MCF 10A (cell line): ENCODE measurements at regions of chr15 and their contacts with region 1.

Region 1: GRCh38 chr15:85800467-85801123 is 5.9 kb upstream of the KLHL25 start:
- DNase-seq: peak; percentile 86
- H3K4me3 Mint-ChIP-seq: no peak overlapping the region
- H3K27ac Mint-ChIP-seq: no peak overlapping the region
- H3K4me1 Mint-ChIP-seq: peaks cover 16% of the 10 kb centered on the region
- H3K27me3 Mint-ChIP-seq: no peaks in the 10 kb centered on the region
- CTCF ChIP-seq: peak; percentile 29

Region 2: DNA sequence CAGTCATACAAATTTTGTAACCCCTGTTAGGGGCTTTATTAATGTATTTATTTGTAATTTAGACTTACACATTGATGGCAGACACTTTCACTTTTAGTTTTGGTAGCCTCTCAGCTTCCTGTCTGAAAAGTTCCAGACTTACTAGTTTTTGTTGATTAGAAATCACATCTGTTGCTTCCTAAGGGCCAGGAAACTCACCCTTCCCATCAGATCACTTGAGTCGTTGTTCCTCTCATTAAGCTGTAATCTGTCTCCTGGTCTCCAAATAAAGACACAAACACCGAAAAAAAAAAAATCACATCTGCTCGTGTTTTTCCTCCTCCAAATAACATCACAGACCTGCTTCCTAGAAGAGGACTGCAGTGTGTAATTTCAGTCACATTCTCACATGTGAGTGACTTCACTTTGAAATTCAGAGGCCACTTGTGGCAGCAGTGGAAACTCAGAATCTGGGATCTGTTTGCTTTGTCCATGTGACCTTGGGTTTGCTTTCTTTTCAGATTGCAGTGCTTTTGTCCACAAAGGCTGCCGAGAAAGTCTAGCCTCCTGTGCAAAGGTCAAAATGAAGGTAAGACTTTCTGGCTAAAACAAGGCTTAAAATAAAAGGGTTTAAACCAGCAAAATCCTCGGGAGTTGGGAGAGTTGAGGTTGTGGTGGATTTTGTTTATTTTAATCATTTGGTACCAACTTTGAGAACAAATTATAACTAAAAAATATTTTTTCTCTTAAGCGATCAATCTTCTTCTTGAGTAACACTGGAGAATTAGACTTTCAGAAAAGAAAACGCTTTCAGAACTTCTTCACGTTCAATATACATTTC is 92.9 kb before region 1 on chr15:
- CTCF ChIA-PET with region 1: no interaction called
- POLR2A ChIA-PET with region 1: no interaction called
- intact Hi-C with region 1: no loop called
- DNase-seq: no peak
- H3K4me3 Mint-ChIP-seq: no peak overlapping the region
- H3K27ac Mint-ChIP-seq: peak overlapping the region; percentile 69
- H3K4me1 Mint-ChIP-seq: peaks cover 4% of the 10 kb centered on the region
- H3K27me3 Mint-ChIP-seq: no peaks in the 10 kb centered on the region
- CTCF ChIP-seq: no peak

Region 3: GRCh38 chr15:85819938-85820337 is 19.3 kb after region 1 on chr15:
- CTCF ChIA-PET with region 1: no interaction called
- POLR2A ChIA-PET with region 1: interaction called, 3 read pairs
- intact Hi-C with region 1: loop called (anchors 1 kb)
- DNase-seq: no peak
- H3K4me3 Mint-ChIP-seq: no peak overlapping the region
- H3K27ac Mint-ChIP-seq: no peak overlapping the region
- H3K4me1 Mint-ChIP-seq: no peaks in the 10 kb centered on the region
- H3K27me3 Mint-ChIP-seq: peaks cover 21% of the 10 kb centered on the region
- CTCF ChIP-seq: no peak

Region 4: GRCh38 chr15:86725628-86726027 is 925.0 kb after region 1 on chr15:
- CTCF ChIA-PET with region 1: no interaction called
- POLR2A ChIA-PET with region 1: no interaction called
- intact Hi-C with region 1: no loop called
- DNase-seq: no peak
- H3K4me3 Mint-ChIP-seq: no peak overlapping the region
- H3K27ac Mint-ChIP-seq: no peak overlapping the region
- H3K4me1 Mint-ChIP-seq: peaks cover 7% of the 10 kb centered on the region
- H3K27me3 Mint-ChIP-seq: no peaks in the 10 kb centered on the region
- CTCF ChIP-seq: no peak